Activated CD8-positive, alpha-beta T cell treated with anti-CD3 and anti-CD28 coated beads, Interleukin-2, amount 10 ng/mL, durations not matched to agents 7 days and 5 days (primary cell): ENCODE measurements at regions of chr7 and their contacts with region 1.

Region 1: GRCh38 chr7:39894904-39895303 is 55.2 kb upstream of the CDK13 start:
- DNase-seq: no peak
- ATAC-seq: no peak
- H3K4me3 Mint-ChIP-seq: no peak overlapping the region
- H3K27ac Mint-ChIP-seq: no peak overlapping the region
- H3K4me1 Mint-ChIP-seq: no peaks in the 10 kb centered on the region
- H3K27me3 Mint-ChIP-seq: peaks cover 5% of the 10 kb centered on the region

Region 2: GRCh38 chr7:39910108-39910869 is 15.4 kb after region 1 on chr7:
- CTCF ChIA-PET with region 1: interaction called, 13 read pairs
- POLR2A ChIA-PET with region 1: no interaction called
- DNase-seq: no peak
- ATAC-seq: no peak
- H3K4me3 Mint-ChIP-seq: no peak overlapping the region
- H3K27ac Mint-ChIP-seq: no peak overlapping the region
- H3K4me1 Mint-ChIP-seq: peaks cover 4% of the 10 kb centered on the region
- H3K27me3 Mint-ChIP-seq: no peaks in the 10 kb centered on the region

Region 3: DNA sequence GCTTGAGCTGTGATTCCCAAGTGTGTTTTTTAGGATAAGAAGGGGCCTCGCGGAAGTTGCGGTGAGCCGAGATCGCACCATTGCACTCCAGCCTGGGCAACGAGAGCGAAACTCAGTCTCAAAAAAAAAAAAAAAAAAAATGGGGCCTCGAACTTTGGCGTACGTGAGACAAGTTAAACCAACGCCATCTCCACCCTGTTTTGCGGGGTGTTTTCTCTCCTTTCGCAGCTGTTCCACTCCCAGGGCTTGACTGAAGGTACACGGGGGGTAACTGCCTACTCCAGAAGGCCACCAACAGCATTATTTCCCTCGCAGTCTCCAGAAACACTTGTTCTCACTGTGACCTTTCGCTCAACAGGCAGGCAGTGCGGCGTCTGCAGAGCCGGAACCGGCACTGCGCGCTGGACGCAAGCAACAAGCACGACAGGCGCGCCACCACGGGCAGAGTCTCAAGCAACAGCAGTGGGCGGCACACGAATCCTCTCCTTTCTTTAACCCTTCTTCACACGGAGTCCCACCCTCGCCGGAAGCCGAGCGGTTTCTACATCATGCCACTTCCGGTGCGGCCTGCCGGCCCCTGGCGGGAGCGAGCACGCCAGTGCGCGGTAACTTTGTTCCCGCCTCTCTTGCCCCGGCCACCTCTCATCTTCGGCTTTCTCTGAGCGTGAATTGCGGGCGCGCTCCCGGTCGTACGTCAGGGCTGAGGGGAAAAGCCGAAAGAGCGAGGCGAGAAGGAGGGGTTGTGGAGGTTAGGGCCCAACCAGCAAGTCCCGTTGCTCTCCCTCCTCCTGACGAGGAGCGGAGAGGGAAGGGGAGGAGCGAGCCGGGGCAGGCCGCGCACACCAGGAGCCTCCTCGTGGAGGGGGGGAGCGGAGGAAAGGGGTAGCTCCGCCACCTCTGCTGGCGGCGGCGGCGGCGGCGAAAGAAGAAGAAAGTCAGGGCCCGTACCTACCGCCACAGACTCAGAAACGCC is 54.3 kb after region 1 on chr7:
- CTCF ChIA-PET with region 1: interaction called, 20 read pairs
- POLR2A ChIA-PET with region 1: interaction called, 3 read pairs
- DNase-seq: peak; percentile 98
- ATAC-seq: peak; percentile 75
- H3K4me3 Mint-ChIP-seq: peak overlapping the region; percentile 95
- H3K27ac Mint-ChIP-seq: peak overlapping the region; percentile 100
- H3K4me1 Mint-ChIP-seq: peaks cover 39% of the 10 kb centered on the region
- H3K27me3 Mint-ChIP-seq: no peaks in the 10 kb centered on the region

Region 4: GRCh38 chr7:40047661-40048060 is 152.8 kb after region 1 on chr7:
- CTCF ChIA-PET with region 1: interaction called, 141 read pairs
- POLR2A ChIA-PET with region 1: no interaction called
- DNase-seq: no peak
- ATAC-seq: no peak
- H3K4me3 Mint-ChIP-seq: no peak overlapping the region
- H3K27ac Mint-ChIP-seq: no peak overlapping the region
- H3K4me1 Mint-ChIP-seq: peaks cover 2% of the 10 kb centered on the region
- H3K27me3 Mint-ChIP-seq: no peaks in the 10 kb centered on the region

Region 5: DNA sequence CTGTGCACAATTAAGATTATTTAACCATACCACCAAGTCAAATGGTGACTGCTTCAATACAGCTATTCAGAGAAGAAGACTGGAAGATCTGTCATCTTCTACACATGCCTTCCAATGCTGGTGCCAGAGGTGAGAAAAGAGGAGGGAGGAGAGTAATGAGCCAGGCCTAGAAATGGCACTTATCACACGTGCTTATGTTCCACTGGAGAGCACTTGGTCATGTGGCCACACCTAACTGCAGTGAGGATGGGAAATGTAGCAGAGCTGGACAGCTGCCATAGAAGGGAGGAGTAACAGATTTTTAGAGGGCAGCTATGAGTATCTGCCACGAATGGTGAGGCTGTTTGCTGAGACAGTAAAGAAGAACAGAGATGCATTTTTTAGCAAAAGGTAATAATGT is 162.4 kb after region 1 on chr7:
- CTCF ChIA-PET with region 1: interaction called, 141 read pairs
- POLR2A ChIA-PET with region 1: no interaction called
- DNase-seq: no peak
- ATAC-seq: no peak
- H3K4me3 Mint-ChIP-seq: no peak overlapping the region
- H3K27ac Mint-ChIP-seq: no peak overlapping the region
- H3K4me1 Mint-ChIP-seq: peaks cover 3% of the 10 kb centered on the region
- H3K27me3 Mint-ChIP-seq: no peaks in the 10 kb centered on the region